PC-3 (cell line): ENCODE measurements at regions of chr3 and their contacts with region 1.

Region 1: DNA sequence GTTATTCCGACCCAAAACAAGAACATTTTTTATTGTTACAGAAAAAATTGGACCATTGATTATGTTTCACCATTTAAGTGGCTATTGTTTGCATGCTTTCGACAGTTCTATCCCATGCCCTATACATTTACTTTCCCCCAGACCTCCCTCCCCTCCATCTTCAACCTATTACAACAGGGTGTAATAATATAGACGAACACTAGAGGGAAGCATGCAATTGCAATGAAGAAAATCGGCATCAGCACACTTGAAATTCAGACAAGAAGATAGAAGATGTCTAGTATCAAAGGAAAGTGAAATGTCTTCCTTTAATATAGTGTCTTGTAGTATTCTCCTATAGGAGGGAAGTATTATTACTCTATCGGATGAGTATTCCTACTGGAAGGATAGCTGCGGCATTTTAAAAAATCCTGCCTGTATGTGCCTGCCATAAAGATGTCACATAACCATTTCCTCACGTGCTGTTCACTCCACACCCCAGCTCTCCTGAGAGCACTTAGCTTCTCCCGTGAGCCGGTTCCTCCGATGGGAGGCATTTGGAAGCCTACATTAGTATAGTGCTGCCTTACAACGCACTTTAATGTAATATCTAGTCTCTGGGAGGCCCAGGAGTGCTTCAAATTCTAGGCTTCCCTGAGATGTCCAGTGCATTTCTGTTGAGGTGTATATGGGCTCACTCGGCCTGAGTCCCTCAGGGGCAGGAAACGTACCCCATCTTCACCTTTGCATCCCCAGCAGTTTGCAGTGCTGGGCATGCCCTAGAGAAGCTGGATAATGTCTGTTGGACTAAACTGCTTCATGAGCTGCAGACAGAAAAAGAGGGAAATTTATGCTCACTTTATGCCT is 17.8 kb upstream of the ERICH6 start:
- DNase-seq: peak; percentile 86
- ATAC-seq: peak; percentile 61
- H3K4me3 ChIP-seq: no peak overlapping the region
- H3K27ac ChIP-seq: no peak overlapping the region
- H3K4me1 ChIP-seq: peaks cover 13% of the 10 kb centered on the region
- H3K27me3 ChIP-seq: no peaks in the 10 kb centered on the region
- CTCF ChIP-seq: peak; percentile 94

Region 2: GRCh38 chr3:150384296-150385212 is 337.0 kb before region 1 on chr3:
- CTCF ChIA-PET with region 1: no interaction called
- POLR2A ChIA-PET with region 1: no interaction called
- intact Hi-C with region 1: no loop called
- DNase-seq: no peak
- ATAC-seq: no peak
- H3K4me3 ChIP-seq: no peak overlapping the region
- H3K27ac ChIP-seq: no peak overlapping the region
- H3K4me1 ChIP-seq: no peaks in the 10 kb centered on the region
- H3K27me3 ChIP-seq: no peaks in the 10 kb centered on the region
- CTCF ChIP-seq: no peak

Region 3: GRCh38 chr3:150744041-150744918 is 22.8 kb after region 1 on chr3:
- CTCF ChIA-PET with region 1: interaction called, 4 read pairs
- POLR2A ChIA-PET with region 1: no interaction called
- intact Hi-C with region 1: loop called (anchors 2 kb)
- DNase-seq: peak; percentile 57
- ATAC-seq: peak; percentile 77
- H3K4me3 ChIP-seq: no peak overlapping the region
- H3K27ac ChIP-seq: peak overlapping the region; percentile 38
- H3K4me1 ChIP-seq: peaks cover 29% of the 10 kb centered on the region
- H3K27me3 ChIP-seq: no peaks in the 10 kb centered on the region
- CTCF ChIP-seq: no peak

Region 4: DNA sequence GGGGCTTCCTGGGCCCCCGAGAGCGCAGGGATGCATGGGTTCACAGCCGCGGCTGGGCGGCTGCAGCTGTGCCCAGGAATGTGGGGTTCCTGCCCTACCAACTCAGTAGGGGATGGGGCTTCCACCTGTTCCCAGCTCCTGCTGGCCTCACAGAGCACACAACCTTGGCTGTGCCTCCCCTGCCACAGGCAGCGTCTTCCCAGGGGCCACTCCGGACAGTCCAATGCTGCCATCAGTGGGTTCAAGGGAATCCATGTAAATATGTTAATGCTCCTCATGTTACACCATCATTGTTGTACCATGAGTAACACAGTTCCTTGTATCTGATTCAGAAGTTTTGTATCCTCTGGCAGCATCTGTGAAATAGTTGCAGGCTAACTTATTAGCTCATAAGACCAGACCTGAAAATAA is 53.6 kb after region 1 on chr3:
- CTCF ChIA-PET with region 1: no interaction called
- POLR2A ChIA-PET with region 1: no interaction called
- intact Hi-C with region 1: no loop called
- DNase-seq: no peak
- ATAC-seq: no peak
- H3K4me3 ChIP-seq: no peak overlapping the region
- H3K27ac ChIP-seq: no peak overlapping the region
- H3K4me1 ChIP-seq: no peaks in the 10 kb centered on the region
- H3K27me3 ChIP-seq: no peaks in the 10 kb centered on the region
- CTCF ChIP-seq: no peak

Region 5: GRCh38 chr3:150787741-150788370 is 66.3 kb after region 1 on chr3:
- CTCF ChIA-PET with region 1: no interaction called
- POLR2A ChIA-PET with region 1: no interaction called
- intact Hi-C with region 1: loop called (anchors 2 kb)
- DNase-seq: peak; percentile 86
- ATAC-seq: peak; percentile 71
- H3K4me3 ChIP-seq: no peak overlapping the region
- H3K27ac ChIP-seq: no peak overlapping the region
- H3K4me1 ChIP-seq: peaks cover 45% of the 10 kb centered on the region
- H3K27me3 ChIP-seq: no peaks in the 10 kb centered on the region
- CTCF ChIP-seq: peak; percentile 98

Region 6: DNA sequence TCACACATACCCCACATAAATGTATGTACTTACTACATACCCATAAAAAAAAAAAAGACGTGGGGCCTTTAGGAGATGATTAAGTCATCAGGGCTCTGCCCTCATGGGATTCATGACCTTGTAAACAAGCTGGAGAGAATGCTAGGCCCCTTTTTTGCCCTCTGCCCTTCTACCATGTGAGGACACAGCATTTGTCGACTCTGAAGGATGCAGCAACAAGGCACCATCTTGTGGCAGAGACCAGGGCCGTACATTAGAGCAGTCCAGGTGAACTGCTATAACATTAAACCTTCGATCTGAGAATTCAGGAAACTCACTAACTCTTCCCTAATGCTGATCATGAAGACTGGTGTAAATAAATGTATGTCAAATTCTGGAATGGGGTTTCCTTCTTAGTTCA is 72.1 kb after region 1 on chr3:
- CTCF ChIA-PET with region 1: no interaction called
- POLR2A ChIA-PET with region 1: no interaction called
- intact Hi-C with region 1: loop called (anchors 1 kb)
- DNase-seq: no peak
- ATAC-seq: no peak
- H3K4me3 ChIP-seq: no peak overlapping the region
- H3K27ac ChIP-seq: no peak overlapping the region
- H3K4me1 ChIP-seq: 0 out of 2 replicates have a peak, but pooled peaks cover 4% of the 10 kb centered on the region
- H3K27me3 ChIP-seq: 0 out of 2 replicates have a peak, but pooled peaks cover 5% of the 10 kb centered on the region
- CTCF ChIP-seq: no peak

Region 7: DNA sequence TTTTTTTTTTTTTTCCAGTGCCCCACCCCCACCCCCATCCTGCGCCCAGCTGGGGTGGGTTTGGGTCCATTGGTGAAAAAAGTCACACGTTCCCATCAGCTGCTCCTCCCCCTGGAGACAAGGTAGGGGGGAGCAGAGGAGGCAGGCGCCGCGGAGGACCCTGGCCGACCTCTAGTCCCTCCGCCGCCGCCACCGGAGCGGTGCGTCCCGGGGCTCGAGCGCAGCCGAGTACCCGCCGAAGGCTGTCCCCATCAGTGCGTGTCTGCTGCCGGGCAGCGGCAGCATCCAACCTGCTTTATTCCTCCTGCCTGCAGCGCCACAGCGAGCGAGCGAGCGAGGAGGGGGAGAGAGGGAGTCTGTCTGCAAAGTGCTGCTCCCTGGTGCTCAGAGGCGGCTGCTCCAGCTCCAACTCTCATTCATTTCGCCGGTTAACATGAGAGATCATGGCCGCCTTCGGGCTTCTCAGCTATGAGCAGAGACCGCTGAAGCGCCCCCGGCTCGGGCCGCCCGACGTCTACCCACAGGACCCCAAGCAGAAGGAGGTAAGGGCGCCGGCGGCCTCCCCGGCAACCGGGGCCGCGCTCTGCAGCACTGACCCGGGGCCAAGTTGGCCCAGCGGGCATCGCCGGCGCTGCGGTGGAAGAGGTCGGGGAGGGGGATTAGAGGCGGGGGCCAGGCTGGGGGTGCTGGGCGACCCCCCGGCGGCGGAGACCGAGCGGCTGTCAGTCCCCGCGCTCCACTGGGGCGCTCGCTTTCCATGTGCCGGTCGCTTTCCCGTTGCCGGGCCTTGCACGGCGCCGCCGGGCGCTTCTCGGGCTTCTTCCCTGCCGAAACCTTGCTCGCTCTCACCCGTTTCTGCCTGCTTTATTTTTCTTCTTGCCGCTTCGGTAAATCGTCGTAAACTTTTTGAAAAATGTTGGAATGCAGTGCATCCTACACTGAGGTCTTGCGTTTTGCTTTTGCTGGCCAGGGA is 365.3 kb after region 1 on chr3:
- CTCF ChIA-PET with region 1: no interaction called
- POLR2A ChIA-PET with region 1: no interaction called
- intact Hi-C with region 1: no loop called
- DNase-seq: peak; percentile 83
- ATAC-seq: peak; percentile 89
- H3K4me3 ChIP-seq: peak overlapping the region; percentile 73
- H3K27ac ChIP-seq: no peak overlapping the region
- H3K4me1 ChIP-seq: peaks cover 10% of the 10 kb centered on the region
- H3K27me3 ChIP-seq: peaks cover 40% of the 10 kb centered on the region
- CTCF ChIP-seq: peak; percentile 55; the same call in 1 of the 2 replicates